ENCODE measurements at regions of chr4 and their contacts with region 1.

Region 1: GRCh38 chr4:82428969-82429727 is 1.1 kb downstream of the HNRNPDL start:
- DNase-seq: peak; percentile 95
- H3K4me3 ChIP-seq: peak overlapping the region; percentile 62 to 94 (median 80)
- H3K27ac ChIP-seq: peak overlapping the region; percentile 97 to 100 (median 98)
- H3K4me1 ChIP-seq: peaks cover 17 to 49% (median 25%) of the 10 kb centered on the region in 4 donors
- H3K27me3 ChIP-seq: no peaks in the 10 kb centered on the region
- CTCF ChIP-seq: peak; percentile 47 to 98 (median 96)
- EP300 ChIP-seq: peak; percentile 13
- POLR2A ChIP-seq: peak; percentile 86

Region 2: DNA sequence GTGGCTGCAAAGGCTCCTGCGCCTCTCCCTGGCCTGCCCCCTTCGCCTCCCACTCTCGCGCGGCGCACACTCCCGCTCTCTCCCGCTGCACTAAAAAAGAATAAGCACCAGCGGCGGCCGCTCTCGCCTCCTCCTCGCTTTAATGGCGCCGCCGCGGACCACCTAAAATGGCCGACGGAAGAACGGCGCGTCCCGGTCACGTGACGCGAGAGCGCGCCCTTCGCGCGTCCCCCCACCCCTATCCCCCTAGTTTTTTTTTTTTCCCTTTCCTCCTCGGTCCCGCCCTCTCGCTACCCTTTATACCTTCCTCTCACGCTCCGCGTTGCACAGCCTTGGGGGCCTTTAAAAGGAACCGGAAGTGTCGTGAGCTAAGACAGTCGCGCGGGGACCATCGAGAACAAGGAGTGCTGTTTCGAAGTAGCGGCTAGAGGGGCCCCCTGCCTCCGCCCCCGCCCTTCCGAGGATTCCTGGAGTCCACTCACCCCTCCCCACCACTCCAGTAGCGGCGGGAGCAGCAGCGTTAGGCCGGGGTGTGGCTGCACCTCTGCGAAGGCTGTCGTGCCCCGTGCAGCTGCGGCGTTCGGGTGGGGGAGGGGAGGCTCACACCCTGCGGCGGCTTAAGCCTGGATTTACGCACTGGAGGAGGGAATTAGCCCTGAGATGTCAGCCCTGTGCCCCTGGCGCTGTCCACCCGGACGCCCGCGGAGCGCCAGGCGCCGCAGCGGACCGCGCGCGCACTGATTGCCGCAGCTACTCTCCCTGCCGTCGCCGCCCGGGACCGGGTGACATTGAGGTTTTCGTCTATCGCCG is 55.1 kb before region 1 on chr4 and contains the start of gene HNRNPD:
- in situ Hi-C with region 1: loop called in 3 of 4 experiments (anchors 5 to 10 kb)
- intact Hi-C with region 1: loop called (anchors 1 kb)
- DNase-seq: peak; percentile 98
- H3K4me3 ChIP-seq: peak within 1 kb of the TSS; percentile 77 to 97 (median 86)
- H3K27ac ChIP-seq: peak within 1 kb of the TSS; percentile 97 to 100 (median 99)
- H3K4me1 ChIP-seq: peaks cover 16 to 45% (median 34%) of the 10 kb centered on the region in 4 donors
- H3K27me3 ChIP-seq: no peaks in the 10 kb centered on the region
- CTCF ChIP-seq: peak in 1 of 5 experiments; percentile 29
- EP300 ChIP-seq: peak; percentile 44
- POLR2A ChIP-seq: peak; percentile 95
- total RNA-seq, gene HNRNPD: 61.4 to 213 (median 130) TPM

Region 3: DNA sequence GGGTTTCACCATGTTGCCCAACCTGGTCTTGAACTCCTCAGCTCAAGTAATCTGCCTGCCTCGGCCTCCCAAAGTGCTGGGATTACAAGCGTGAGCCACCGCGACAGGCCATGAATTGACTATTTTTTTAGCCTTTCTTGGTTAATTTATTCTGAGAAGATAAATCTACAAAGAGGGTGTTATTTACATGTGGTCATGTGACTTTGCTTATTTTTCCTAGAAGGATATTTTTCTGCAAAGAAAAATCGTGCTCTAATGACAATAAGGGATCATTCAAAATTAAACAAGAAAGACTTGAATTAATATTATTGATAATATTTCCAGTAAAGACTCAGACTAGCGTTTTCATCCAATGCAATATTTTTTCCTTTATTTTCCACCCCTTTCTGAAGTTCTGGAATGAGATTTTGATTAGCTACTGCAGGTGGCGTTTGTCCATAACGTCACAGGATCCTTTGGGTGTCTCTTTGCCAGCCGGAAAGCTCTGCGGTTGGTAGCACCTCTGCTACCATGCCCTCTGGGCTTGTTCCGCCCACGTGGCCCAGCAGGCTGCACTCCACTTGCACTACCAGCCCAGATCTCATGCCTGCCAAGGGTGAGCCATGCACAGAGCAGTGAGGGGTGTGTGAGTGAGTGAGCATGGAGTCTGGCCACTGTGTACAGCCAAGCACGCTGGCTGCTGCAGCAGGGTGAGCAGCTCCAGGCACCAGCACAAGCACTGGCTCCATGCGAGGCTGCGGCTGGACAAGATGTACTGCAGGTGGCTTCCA is 49.0 kb before region 1 on chr4:
- in situ Hi-C with region 1: loop called in 3 of 4 experiments (anchors 5 to 10 kb)
- intact Hi-C with region 1: no loop called
- DNase-seq: no peak
- H3K4me3 ChIP-seq: no peak overlapping the region
- H3K27ac ChIP-seq: no peak overlapping the region
- H3K4me1 ChIP-seq: peaks cover 0 to 11% (median 9%) of the 10 kb centered on the region in 4 donors
- H3K27me3 ChIP-seq: no peaks in the 10 kb centered on the region
- CTCF ChIP-seq: no peak
- EP300 ChIP-seq: no peak
- POLR2A ChIP-seq: no peak

Region 4: GRCh38 chr4:82462415-82462831 is 33.3 kb after region 1 on chr4:
- in situ Hi-C with region 1: no loop called
- intact Hi-C with region 1: no loop called
- DNase-seq: peak; percentile 90
- H3K4me3 ChIP-seq: no peak overlapping the region
- H3K27ac ChIP-seq: peak overlapping the region in 1 of 4 donors; percentile 27
- H3K4me1 ChIP-seq: peaks cover 0 to 7% (median 3%) of the 10 kb centered on the region in 4 donors
- H3K27me3 ChIP-seq: no peaks in the 10 kb centered on the region
- CTCF ChIP-seq: peak; percentile 54 to 92 (median 84)
- EP300 ChIP-seq: no peak
- POLR2A ChIP-seq: no peak

Measured in transverse colon (tissue), 4 donors.